K562 (cell line): ENCODE measurements at regions of chr3 and their contacts with region 1.

Region 1: DNA sequence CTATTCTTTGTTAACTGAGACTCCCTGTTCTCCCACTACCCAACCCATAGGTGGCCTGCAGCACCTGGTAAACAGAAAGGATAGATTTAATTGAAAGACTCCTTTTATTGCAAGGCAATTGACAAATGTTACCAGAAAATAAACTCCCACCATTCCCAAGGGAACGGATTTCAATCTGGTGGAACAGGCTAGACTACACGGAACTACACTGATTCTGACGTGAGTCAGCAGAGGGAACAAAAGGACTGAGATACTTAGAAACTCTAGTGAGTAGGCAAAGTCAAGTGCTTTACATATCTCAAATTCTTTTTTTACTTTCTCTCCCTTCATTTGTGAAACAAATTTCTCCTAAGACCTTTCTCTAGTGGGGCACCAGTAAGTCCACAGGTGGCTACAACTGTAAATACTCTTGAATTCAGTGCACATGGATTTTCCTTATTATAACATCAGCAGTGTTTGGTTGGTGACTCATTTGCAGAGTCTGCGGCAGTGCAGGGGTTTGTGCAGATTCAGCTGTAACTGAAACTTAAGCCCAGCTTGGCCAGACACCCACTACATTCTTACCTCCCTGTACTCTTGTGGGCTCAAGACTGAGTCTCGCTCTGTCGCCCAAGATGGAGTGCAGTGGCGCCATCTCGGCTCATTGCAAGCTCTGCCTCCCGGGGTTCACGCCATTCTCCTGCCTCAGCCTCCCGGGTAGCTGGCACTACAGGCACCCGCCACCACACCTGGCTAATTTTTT is 34.3 kb upstream of the PLSCR2 start:
- DNase-seq: no peak
- ATAC-seq: peak; percentile 65
- H3K4me3 ChIP-seq: no peak overlapping the region
- H3K27ac ChIP-seq: no peak overlapping the region; the same call in 2 of the 3 replicates
- H3K4me1 ChIP-seq: peaks cover 5 to 30% of the 10 kb centered on the region in 2 experiments; a peak in 4 of 5 replicates
- H3K27me3 ChIP-seq: no peaks in the 10 kb centered on the region
- CTCF ChIP-seq: no peak
- EP300 ChIP-seq: no peak
- POLR2A ChIP-seq: no peak
- RAD21 ChIP-seq: 0 out of 4 replicates have a peak, but pooled peaks of 1 of the 2 experiments have one; percentile 5

Region 2: DNA sequence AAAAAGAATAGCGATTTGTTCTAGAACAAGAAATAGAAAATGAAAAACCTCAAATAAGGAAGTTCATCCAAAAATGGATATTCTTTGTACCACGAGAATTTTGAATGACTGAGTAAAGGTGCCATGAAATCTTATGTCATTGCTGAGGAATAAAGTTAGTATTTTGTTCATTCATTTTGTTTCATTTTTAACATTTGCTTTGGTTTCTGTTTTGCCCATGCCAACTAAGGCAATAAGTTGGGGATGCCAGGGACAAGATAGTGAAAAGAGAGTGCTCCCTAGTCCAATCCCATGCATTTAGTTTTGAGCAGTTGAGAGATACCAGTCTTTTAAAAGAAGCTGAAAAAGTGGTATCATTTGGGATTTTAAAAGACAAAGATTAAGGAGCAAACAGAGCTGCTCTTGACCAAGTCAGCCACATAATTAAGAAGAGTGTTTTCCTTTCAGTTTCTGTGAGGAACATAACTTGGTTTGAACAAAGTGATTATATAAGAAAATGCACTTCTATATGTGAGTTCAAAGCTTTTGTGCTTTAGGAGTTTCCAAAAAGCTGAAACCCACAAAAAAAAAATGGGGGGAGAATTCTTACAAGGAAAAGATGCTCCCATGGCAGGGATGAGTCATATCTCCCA is 544.1 kb before region 1 on chr3:
- CTCF ChIA-PET with region 1: no interaction called
- POLR2A ChIA-PET with region 1: no interaction called
- in situ Hi-C with region 1: no loop called
- intact Hi-C with region 1: no loop called
- DNase-seq: no peak
- ATAC-seq: no peak
- H3K4me3 ChIP-seq: no peak overlapping the region
- H3K27ac ChIP-seq: no peak overlapping the region
- H3K4me1 ChIP-seq: no peaks in the 10 kb centered on the region
- H3K27me3 ChIP-seq: no peaks in the 10 kb centered on the region
- CTCF ChIP-seq: no peak
- EP300 ChIP-seq: no peak
- POLR2A ChIP-seq: no peak
- RAD21 ChIP-seq: no peak

Region 3: DNA sequence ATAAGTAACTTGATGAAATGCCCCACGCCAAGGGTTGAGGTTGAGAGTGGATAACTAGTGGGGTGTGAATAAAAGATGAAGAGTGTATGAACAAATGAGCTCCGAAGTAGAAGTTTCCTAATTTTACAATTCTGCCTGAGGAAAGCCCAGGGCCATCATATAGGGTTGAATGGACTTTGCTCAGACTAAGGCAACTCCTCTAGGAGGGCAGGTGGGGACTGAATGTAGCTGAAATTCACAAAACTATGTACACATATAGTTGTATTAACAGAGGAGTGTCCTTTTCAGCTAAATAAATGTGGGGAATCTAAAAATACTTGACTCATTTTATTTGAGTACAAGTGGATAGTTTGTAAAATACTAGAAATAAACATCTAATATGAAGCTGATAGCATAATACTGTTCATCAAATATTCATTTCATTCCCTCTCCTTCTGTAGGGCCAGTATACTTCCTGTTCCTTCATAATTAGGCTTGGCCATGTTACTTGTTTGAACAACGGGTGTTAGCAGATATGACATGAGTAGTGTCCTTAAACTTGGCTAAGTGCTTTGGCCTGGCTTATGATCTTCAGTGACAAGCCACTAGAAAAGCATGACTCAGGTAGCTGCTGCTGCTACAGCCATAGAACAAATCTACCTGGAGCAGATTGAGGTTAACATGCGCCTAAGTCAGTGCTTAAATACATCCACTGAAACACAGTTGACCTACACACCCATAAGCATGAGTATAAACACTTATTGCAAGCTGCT is 14.2 kb after region 1 on chr3:
- CTCF ChIA-PET with region 1: no interaction called
- POLR2A ChIA-PET with region 1: interaction called, 10 read pairs
- in situ Hi-C with region 1: no loop called
- intact Hi-C with region 1: no loop called
- DNase-seq: peak in 2 of 4 experiments; percentile 45 to 60
- ATAC-seq: peak; percentile 93
- H3K4me3 ChIP-seq: no peak overlapping the region
- H3K27ac ChIP-seq: peak overlapping the region; percentile 8; the same call in 1 of the 3 replicates
- H3K4me1 ChIP-seq: peaks cover 0 to 6% of the 10 kb centered on the region in 2 experiments; a peak in 1 of 5 replicates
- H3K27me3 ChIP-seq: no peaks in the 10 kb centered on the region
- CTCF ChIP-seq: no peak
- EP300 ChIP-seq: peak; percentile 8; the same call in 1 of the 2 replicates
- POLR2A ChIP-seq: no peak
- RAD21 ChIP-seq: 0 out of 4 replicates have a peak, but pooled peaks of 1 of the 2 experiments have one; percentile 0

Region 4: GRCh38 chr3:146544002-146544928 is 40.6 kb after region 1 on chr3 and contains the start of gene PLSCR1:
- CTCF ChIA-PET with region 1: no interaction called
- POLR2A ChIA-PET with region 1: no interaction called
- in situ Hi-C with region 1: no loop called
- intact Hi-C with region 1: loop called (anchors 5 kb)
- DNase-seq: peak; percentile 92 to 95 (median 94)
- ATAC-seq: peak; percentile 92
- H3K4me3 ChIP-seq: peak within 1 kb of the TSS; percentile 92
- H3K27ac ChIP-seq: peak within 1 kb of the TSS; percentile 92
- H3K4me1 ChIP-seq: peaks cover 4 to 28% of the 10 kb centered on the region in 2 experiments; a peak in 4 of 5 replicates
- H3K27me3 ChIP-seq: no peaks in the 10 kb centered on the region
- CTCF ChIP-seq: no peak
- EP300 ChIP-seq: peak; percentile 29; the same call in 1 of the 2 replicates
- POLR2A ChIP-seq: peak; percentile 89
- RAD21 ChIP-seq: no peak
- polyA plus RNA-seq, gene PLSCR1: 115 to 122 TPM

Region 5: GRCh38 chr3:146598535-146598934 is 94.9 kb after region 1 on chr3:
- CTCF ChIA-PET with region 1: no interaction called
- POLR2A ChIA-PET with region 1: no interaction called
- in situ Hi-C with region 1: no loop called
- intact Hi-C with region 1: no loop called
- DNase-seq: no peak
- ATAC-seq: no peak
- H3K4me3 ChIP-seq: no peak overlapping the region
- H3K27ac ChIP-seq: no peak overlapping the region
- H3K4me1 ChIP-seq: no peaks in the 10 kb centered on the region
- H3K27me3 ChIP-seq: no peaks in the 10 kb centered on the region
- CTCF ChIP-seq: no peak
- EP300 ChIP-seq: no peak
- POLR2A ChIP-seq: no peak
- RAD21 ChIP-seq: no peak

Region 6: GRCh38 chr3:146953511-146953981 is 449.9 kb after region 1 on chr3:
- CTCF ChIA-PET with region 1: no interaction called
- POLR2A ChIA-PET with region 1: no interaction called
- in situ Hi-C with region 1: no loop called
- intact Hi-C with region 1: no loop called
- DNase-seq: no peak
- ATAC-seq: no peak
- H3K4me3 ChIP-seq: no peak overlapping the region
- H3K27ac ChIP-seq: no peak overlapping the region
- H3K4me1 ChIP-seq: no peaks in the 10 kb centered on the region
- H3K27me3 ChIP-seq: no peaks in the 10 kb centered on the region
- CTCF ChIP-seq: no peak
- EP300 ChIP-seq: no peak
- POLR2A ChIP-seq: no peak
- RAD21 ChIP-seq: no peak